Activated CD8-positive, alpha-beta T cell treated with anti-CD3 and anti-CD28 coated beads for 36 hours (primary cell): ENCODE measurements at regions of chr14 and their contacts with region 1.

Region 1: GRCh38 chr14:52918486-52918885 is 32.4 kb downstream of the FERMT2 start:
- DNase-seq: peak; percentile 43
- ATAC-seq: peak; percentile 97
- H3K4me3 Mint-ChIP-seq: no peak overlapping the region
- H3K27ac Mint-ChIP-seq: peak overlapping the region; percentile 61
- H3K4me1 Mint-ChIP-seq: peaks cover 23% of the 10 kb centered on the region
- H3K27me3 Mint-ChIP-seq: no peaks in the 10 kb centered on the region
- CTCF ChIP-seq: no peak

Region 2: GRCh38 chr14:52873694-52874093 is 44.8 kb before region 1 on chr14:
- CTCF ChIA-PET with region 1: no interaction called
- POLR2A ChIA-PET with region 1: no interaction called
- intact Hi-C with region 1: no loop called
- DNase-seq: no peak
- ATAC-seq: no peak
- H3K4me3 Mint-ChIP-seq: no peak overlapping the region
- H3K27ac Mint-ChIP-seq: no peak overlapping the region
- H3K4me1 Mint-ChIP-seq: no peaks in the 10 kb centered on the region
- H3K27me3 Mint-ChIP-seq: no peaks in the 10 kb centered on the region
- CTCF ChIP-seq: no peak

Region 3: DNA sequence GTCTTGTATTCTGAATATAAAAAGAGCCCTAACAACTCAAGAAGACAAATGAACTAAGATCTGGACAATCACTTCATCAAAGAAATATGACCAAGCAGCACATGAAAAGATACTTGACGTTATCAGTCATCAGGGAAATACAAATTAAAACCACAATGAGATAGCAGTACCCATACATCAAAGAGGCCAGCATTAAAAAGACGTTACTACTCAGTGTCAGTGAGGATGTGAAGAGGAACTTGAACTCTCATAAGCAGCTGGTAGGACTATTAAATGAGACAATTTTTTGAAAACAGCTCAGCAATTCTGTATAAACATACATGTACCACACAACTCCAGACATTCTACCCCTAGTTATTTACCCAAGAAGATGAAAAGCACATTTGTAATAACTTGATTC is 23.5 kb before region 1 on chr14:
- CTCF ChIA-PET with region 1: no interaction called
- POLR2A ChIA-PET with region 1: no interaction called
- intact Hi-C with region 1: no loop called
- DNase-seq: no peak
- ATAC-seq: peak; percentile 37
- H3K4me3 Mint-ChIP-seq: no peak overlapping the region
- H3K27ac Mint-ChIP-seq: no peak overlapping the region
- H3K4me1 Mint-ChIP-seq: peaks cover 4% of the 10 kb centered on the region
- H3K27me3 Mint-ChIP-seq: no peaks in the 10 kb centered on the region
- CTCF ChIP-seq: no peak

Region 4: GRCh38 chr14:53109105-53110041 is 190.9 kb after region 1 on chr14:
- CTCF ChIA-PET with region 1: no interaction called
- POLR2A ChIA-PET with region 1: no interaction called
- intact Hi-C with region 1: loop called (anchors 5 kb)
- DNase-seq: peak; percentile 84
- ATAC-seq: peak; percentile 86
- H3K4me3 Mint-ChIP-seq: no peak overlapping the region
- H3K27ac Mint-ChIP-seq: no peak overlapping the region
- H3K4me1 Mint-ChIP-seq: peaks cover 27% of the 10 kb centered on the region
- H3K27me3 Mint-ChIP-seq: no peaks in the 10 kb centered on the region
- CTCF ChIP-seq: no peak